Breast epithelium (tissue), 4 donors: ENCODE measurements at regions of chr10 and their contacts with region 1.

Region 1: DNA sequence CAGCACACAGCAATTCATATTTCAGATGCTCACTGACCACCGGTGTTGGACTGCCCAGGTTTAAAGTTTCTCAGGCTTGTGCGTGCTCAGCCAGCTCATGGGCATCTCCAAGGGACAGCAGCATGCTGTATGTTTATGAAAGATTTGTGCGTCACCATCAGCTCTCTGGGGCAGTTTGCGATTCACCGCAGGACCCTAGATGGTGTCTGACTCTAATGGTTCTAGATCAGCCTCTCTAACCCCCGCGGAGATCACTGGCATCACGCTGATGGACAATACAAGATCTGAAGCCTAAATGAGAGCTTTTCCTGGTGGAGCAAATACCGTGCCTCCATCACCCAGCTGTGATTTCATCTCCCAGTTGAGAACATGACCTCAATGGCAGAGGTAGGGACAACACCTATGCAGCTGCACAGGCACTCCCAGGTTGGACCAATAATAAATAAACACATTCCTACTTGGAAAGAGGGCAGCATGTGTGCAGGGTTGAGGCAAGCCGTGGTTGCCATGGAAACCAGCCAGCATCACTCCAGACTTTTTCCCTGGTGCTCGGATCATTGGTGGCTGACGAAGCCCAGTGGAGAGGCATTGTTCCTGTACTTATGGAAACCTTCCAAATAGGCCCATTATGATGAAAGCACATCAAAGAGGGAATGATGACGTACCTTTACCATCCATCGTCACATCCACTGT is 253.6 kb downstream of the KCNMA1 start:
- DNase-seq: no peak
- H3K4me3 ChIP-seq: no peak overlapping the region
- H3K27ac ChIP-seq: no peak overlapping the region
- H3K4me1 ChIP-seq: no peaks in the 10 kb centered on the region
- H3K27me3 ChIP-seq: no peaks in the 10 kb centered on the region
- CTCF ChIP-seq: no peak
- POLR2A ChIP-seq: no peak

Region 2: GRCh38 chr10:77180794-77181193 is 203.2 kb before region 1 on chr10:
- intact Hi-C with region 1: loop called (anchors 5 kb)
- DNase-seq: no peak
- H3K4me3 ChIP-seq: no peak overlapping the region
- H3K27ac ChIP-seq: no peak overlapping the region
- H3K4me1 ChIP-seq: no peaks in the 10 kb centered on the region
- H3K27me3 ChIP-seq: no peaks in the 10 kb centered on the region
- CTCF ChIP-seq: no peak
- POLR2A ChIP-seq: no peak

Region 3: DNA sequence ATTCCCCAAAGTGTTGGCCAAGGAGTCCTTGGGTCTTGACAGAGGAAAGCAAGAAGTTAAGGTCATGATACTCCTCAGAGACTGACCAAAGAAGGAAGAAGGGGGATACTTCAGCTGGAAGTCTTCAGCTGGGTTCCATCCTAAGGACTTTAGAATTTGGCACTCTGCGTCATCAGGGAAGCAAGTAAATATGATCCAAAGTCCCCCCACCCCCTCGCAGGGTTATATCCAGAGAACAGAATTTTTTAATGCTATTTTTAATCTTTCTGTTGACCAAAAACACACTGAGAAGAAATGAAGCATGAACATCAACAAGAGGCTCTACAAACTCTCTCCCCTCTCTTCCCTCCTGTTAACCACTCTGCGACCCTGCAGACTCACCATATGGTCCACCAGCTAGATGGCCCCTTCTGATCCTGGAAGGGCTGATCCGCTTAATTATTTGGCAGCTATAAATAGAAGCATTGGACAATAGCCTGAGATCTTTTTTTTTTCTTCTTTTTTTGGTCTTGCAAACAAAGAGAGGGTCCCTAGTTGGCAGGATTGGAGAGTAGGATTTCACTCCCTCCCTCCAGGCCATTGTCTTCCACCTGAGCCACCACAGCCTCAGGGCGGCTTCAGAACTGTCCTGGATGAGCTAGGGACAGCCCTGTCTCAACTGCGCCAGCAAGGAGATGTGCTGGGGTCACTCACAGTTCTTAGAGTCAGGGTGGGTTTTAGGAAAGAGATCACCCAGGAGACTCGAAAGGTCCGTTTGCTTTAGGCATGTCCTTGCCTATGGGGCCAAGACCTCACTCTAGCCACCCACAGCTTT is 57.6 kb after region 1 on chr10:
- intact Hi-C with region 1: no loop called
- DNase-seq: no peak
- H3K4me3 ChIP-seq: no peak overlapping the region
- H3K27ac ChIP-seq: no peak overlapping the region
- H3K4me1 ChIP-seq: no peaks in the 10 kb centered on the region
- H3K27me3 ChIP-seq: no peaks in the 10 kb centered on the region
- CTCF ChIP-seq: no peak
- POLR2A ChIP-seq: no peak